Activated CD8-positive, alpha-beta T cell treated with anti-CD3 and anti-CD28 coated beads for 36 hours (primary cell): ENCODE measurements at regions of chr22 and their contacts with region 1.

Region 1: DNA sequence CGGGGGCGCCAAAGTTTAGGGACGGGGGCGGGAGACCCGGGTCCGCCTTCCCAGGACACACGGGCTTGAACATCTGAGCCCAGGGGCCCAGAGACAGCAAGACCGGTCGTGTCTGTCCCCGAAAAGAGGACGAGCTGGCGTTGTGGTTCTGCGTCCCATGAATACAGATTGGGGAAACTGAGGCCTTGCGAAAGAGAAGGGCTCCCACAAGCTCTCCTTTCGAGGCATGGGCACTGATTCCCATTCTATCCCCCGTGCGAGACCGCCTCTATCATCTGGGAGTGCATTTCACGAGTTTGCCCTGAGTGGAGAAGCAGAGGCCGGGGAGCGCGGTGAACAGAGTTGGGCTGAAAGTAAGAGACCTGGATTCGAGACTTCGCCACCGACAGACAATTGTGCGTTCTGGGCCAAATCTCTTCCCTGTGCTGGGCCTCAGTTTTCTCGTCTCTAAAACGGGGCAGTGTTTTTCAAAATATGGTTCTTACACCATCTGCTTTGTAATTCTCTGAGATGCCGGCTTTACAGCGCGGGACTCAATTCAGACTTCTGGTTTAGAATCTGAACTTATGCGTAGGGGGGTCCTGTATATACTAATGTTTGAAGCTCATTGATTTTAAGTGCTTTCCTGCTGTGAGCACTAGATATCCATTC is 471 bp downstream of the RNF185 start:
- DNase-seq: peak; percentile 13
- ATAC-seq: peak; percentile 38
- H3K4me3 Mint-ChIP-seq: peak overlapping the region; percentile 94
- H3K27ac Mint-ChIP-seq: peak overlapping the region; percentile 94
- H3K4me1 Mint-ChIP-seq: peaks cover 30% of the 10 kb centered on the region
- H3K27me3 Mint-ChIP-seq: no peaks in the 10 kb centered on the region
- CTCF ChIP-seq: no peak

Region 2: GRCh38 chr22:31036671-31037550 is 123.5 kb before region 1 on chr22:
- CTCF ChIA-PET with region 1: no interaction called
- POLR2A ChIA-PET with region 1: no interaction called
- intact Hi-C with region 1: no loop called
- DNase-seq: no peak
- ATAC-seq: no peak
- H3K4me3 Mint-ChIP-seq: no peak overlapping the region
- H3K27ac Mint-ChIP-seq: no peak overlapping the region
- H3K4me1 Mint-ChIP-seq: no peaks in the 10 kb centered on the region
- H3K27me3 Mint-ChIP-seq: peaks cover 2% of the 10 kb centered on the region
- CTCF ChIP-seq: no peak

Region 3: GRCh38 chr22:31062566-31063230 is 97.8 kb before region 1 on chr22:
- CTCF ChIA-PET with region 1: no interaction called
- POLR2A ChIA-PET with region 1: no interaction called
- intact Hi-C with region 1: no loop called
- DNase-seq: no peak
- ATAC-seq: no peak
- H3K4me3 Mint-ChIP-seq: no peak overlapping the region
- H3K27ac Mint-ChIP-seq: no peak overlapping the region
- H3K4me1 Mint-ChIP-seq: no peaks in the 10 kb centered on the region
- H3K27me3 Mint-ChIP-seq: no peaks in the 10 kb centered on the region
- CTCF ChIP-seq: no peak

Region 4: GRCh38 chr22:31148953-31149627 is 11.4 kb before region 1 on chr22:
- CTCF ChIA-PET with region 1: interaction called, 10 read pairs
- POLR2A ChIA-PET with region 1: interaction called, 6 read pairs
- intact Hi-C with region 1: no loop called
- DNase-seq: peak; percentile 60
- ATAC-seq: peak; percentile 77
- H3K4me3 Mint-ChIP-seq: no peak overlapping the region
- H3K27ac Mint-ChIP-seq: no peak overlapping the region
- H3K4me1 Mint-ChIP-seq: no peaks in the 10 kb centered on the region
- H3K27me3 Mint-ChIP-seq: peaks cover 3% of the 10 kb centered on the region
- CTCF ChIP-seq: peak; percentile 75

Region 5: GRCh38 chr22:31173386-31174145 is 13.1 kb after region 1 on chr22:
- CTCF ChIA-PET with region 1: interaction called, 5 read pairs
- POLR2A ChIA-PET with region 1: interaction called, 18 read pairs
- intact Hi-C with region 1: no loop called
- DNase-seq: peak; percentile 5
- ATAC-seq: peak; percentile 90
- H3K4me3 Mint-ChIP-seq: no peak overlapping the region
- H3K27ac Mint-ChIP-seq: peak overlapping the region; percentile 87
- H3K4me1 Mint-ChIP-seq: peaks cover 25% of the 10 kb centered on the region
- H3K27me3 Mint-ChIP-seq: no peaks in the 10 kb centered on the region
- CTCF ChIP-seq: no peak

Region 6: GRCh38 chr22:31211862-31212730 is 51.6 kb after region 1 on chr22 and contains the start of gene LIMK2:
- CTCF ChIA-PET with region 1: interaction called, 4 read pairs
- POLR2A ChIA-PET with region 1: interaction called, 12 read pairs
- intact Hi-C with region 1: no loop called
- DNase-seq: peak; percentile 99
- ATAC-seq: peak; percentile 99
- H3K4me3 Mint-ChIP-seq: peak within 1 kb of the TSS; percentile 82
- H3K27ac Mint-ChIP-seq: peak within 1 kb of the TSS; percentile 82
- H3K4me1 Mint-ChIP-seq: peaks cover 34% of the 10 kb centered on the region
- H3K27me3 Mint-ChIP-seq: no peaks in the 10 kb centered on the region
- CTCF ChIP-seq: peak; percentile 83
- total RNA-seq, gene LIMK2: 23.2 to 25.5 TPM